B cell (primary cell): ENCODE measurements at regions of chr1 and their contacts with region 1.

Region 1: DNA sequence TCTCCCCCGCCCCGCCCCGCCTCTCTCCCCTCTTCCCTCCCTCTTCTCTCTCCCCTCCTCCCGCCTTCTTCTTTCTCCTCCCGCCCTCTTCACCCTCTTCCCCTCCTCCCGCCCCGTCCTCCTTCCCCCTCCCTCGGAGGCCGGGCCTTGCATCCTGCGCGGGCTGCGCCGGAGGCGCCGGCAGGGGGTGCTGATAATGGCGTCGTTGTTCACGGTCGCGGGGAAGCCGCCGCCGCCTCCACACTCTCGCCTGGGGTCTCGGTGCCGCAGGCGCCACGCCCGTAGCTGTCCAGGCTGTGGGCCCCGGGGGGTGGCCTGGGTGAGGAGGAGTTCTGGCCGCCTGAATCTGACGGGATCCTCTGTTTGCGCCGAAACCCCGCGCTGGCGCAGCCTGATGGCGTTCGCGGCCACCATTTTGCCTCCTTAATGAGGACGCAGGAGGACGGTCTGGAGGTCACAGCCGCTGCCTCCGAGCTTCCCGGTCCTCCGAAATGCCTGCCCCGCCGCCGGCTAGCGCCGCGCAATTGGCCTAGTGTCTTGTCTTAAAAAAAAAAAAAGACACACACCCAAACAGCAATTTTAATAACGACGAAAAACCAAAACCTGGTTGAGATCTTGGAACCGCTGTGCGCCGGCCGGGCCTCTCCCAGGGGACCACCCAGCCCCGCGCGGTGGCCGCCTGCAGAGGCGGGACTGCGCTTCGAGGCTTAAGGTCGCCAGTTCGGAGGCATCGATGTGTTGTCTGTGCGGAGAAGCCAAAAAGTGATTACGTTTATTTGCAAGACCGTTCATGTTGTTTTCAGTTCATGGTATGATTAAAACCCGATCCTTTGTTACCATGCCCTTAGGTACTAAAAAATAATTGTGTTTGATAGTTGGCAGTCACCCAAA is 106.6 kb upstream of the HNRNPU start:
- DNase-seq: peak; percentile 98
- ATAC-seq: peak; percentile 78
- H3K4me3 ChIP-seq: peak overlapping the region; percentile 79 to 98 (median 83)
- H3K4me3 Mint-ChIP-seq: peak overlapping the region; percentile 95
- H3K27ac ChIP-seq: peak overlapping the region; percentile 98 to 99
- H3K27ac Mint-ChIP-seq: peak overlapping the region; percentile 99
- H3K4me1 ChIP-seq: peaks cover 8 to 13% of the 10 kb centered on the region in 2 donors
- H3K4me1 Mint-ChIP-seq: peaks cover 17% of the 10 kb centered on the region
- H3K27me3 ChIP-seq: no peaks in the 10 kb centered on the region
- H3K27me3 Mint-ChIP-seq: no peaks in the 10 kb centered on the region
- CTCF ChIP-seq: peak; percentile 51

Region 2: GRCh38 chr1:244451951-244452795 is 518.7 kb before region 1 on chr1:
- CTCF ChIA-PET with region 1: no interaction called
- POLR2A ChIA-PET with region 1: interaction called, 7 read pairs
- intact Hi-C with region 1: loop called (anchors 2 kb)
- DNase-seq: peak; percentile 100
- ATAC-seq: peak; percentile 92
- H3K4me3 ChIP-seq: peak overlapping the region in 4 of 5 experiments; percentile 88 to 98 (median 93)
- H3K4me3 Mint-ChIP-seq: peak overlapping the region; percentile 95
- H3K27ac ChIP-seq: peak overlapping the region; percentile 92 to 94
- H3K27ac Mint-ChIP-seq: peak overlapping the region; percentile 94
- H3K4me1 ChIP-seq: peaks cover 17 to 18% of the 10 kb centered on the region in 2 donors
- H3K4me1 Mint-ChIP-seq: peaks cover 35% of the 10 kb centered on the region
- H3K27me3 ChIP-seq: no peaks in the 10 kb centered on the region
- H3K27me3 Mint-ChIP-seq: no peaks in the 10 kb centered on the region
- CTCF ChIP-seq: peak; percentile 47

Region 3: GRCh38 chr1:244652699-244653466 is 318.0 kb before region 1 on chr1 and contains the start of gene DESI2:
- CTCF ChIA-PET with region 1: no interaction called
- POLR2A ChIA-PET with region 1: interaction called, 3 read pairs
- intact Hi-C with region 1: loop called (anchors 1 kb)
- DNase-seq: peak; percentile 99
- ATAC-seq: peak; percentile 87
- H3K4me3 ChIP-seq: peak within 1 kb of the TSS; percentile 51 to 91 (median 81)
- H3K4me3 Mint-ChIP-seq: no peak within 1 kb of the TSS
- H3K27ac ChIP-seq: peak within 1 kb of the TSS; percentile 64 to 88
- H3K27ac Mint-ChIP-seq: peak within 1 kb of the TSS; percentile 93
- H3K4me1 ChIP-seq: peaks cover 23 to 24% of the 10 kb centered on the region in 2 donors
- H3K4me1 Mint-ChIP-seq: peaks cover 20% of the 10 kb centered on the region
- H3K27me3 ChIP-seq: no peaks in the 10 kb centered on the region
- H3K27me3 Mint-ChIP-seq: no peaks in the 10 kb centered on the region
- CTCF ChIP-seq: peak; percentile 65
- total RNA-seq, gene DESI2: 25.2 and 25.9 TPM in 2 replicates

Region 4: DNA sequence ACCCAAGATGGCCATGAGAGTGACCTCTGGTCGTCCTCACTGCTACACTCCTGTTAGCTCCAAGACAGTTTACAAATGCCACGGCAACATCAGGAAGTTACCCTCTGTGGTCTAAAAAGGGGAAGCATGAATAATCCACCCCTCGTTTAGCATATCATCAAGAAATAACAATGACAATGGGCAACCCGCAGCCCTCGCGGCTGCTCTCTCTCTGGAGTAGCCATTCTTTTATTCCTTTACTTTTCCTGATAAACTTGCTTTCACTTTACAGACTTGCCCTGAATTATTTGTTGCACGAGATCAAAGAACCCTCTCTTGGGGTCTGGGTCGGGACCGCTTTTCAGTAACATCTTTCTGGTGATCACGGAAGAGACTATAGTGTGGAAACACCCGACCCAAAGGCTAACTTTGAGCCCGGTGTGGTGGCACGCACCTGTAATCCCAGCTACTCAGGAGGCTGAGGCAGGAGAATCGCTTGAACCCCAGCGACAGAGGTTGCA is 155.3 kb before region 1 on chr1:
- CTCF ChIA-PET with region 1: interaction called, 3 read pairs
- POLR2A ChIA-PET with region 1: interaction called, 10 read pairs
- intact Hi-C with region 1: no loop called
- DNase-seq: peak; percentile 76
- ATAC-seq: peak; percentile 69
- H3K4me3 ChIP-seq: peak overlapping the region; percentile 47 to 68 (median 55)
- H3K4me3 Mint-ChIP-seq: peak overlapping the region; percentile 82
- H3K27ac ChIP-seq: peak overlapping the region; percentile 10 to 16
- H3K27ac Mint-ChIP-seq: peak overlapping the region; percentile 73
- H3K4me1 ChIP-seq: peaks cover 20 to 28% of the 10 kb centered on the region in 2 donors
- H3K4me1 Mint-ChIP-seq: peaks cover 27% of the 10 kb centered on the region
- H3K27me3 ChIP-seq: no peaks in the 10 kb centered on the region
- H3K27me3 Mint-ChIP-seq: no peaks in the 10 kb centered on the region
- CTCF ChIP-seq: no peak

Region 5: DNA sequence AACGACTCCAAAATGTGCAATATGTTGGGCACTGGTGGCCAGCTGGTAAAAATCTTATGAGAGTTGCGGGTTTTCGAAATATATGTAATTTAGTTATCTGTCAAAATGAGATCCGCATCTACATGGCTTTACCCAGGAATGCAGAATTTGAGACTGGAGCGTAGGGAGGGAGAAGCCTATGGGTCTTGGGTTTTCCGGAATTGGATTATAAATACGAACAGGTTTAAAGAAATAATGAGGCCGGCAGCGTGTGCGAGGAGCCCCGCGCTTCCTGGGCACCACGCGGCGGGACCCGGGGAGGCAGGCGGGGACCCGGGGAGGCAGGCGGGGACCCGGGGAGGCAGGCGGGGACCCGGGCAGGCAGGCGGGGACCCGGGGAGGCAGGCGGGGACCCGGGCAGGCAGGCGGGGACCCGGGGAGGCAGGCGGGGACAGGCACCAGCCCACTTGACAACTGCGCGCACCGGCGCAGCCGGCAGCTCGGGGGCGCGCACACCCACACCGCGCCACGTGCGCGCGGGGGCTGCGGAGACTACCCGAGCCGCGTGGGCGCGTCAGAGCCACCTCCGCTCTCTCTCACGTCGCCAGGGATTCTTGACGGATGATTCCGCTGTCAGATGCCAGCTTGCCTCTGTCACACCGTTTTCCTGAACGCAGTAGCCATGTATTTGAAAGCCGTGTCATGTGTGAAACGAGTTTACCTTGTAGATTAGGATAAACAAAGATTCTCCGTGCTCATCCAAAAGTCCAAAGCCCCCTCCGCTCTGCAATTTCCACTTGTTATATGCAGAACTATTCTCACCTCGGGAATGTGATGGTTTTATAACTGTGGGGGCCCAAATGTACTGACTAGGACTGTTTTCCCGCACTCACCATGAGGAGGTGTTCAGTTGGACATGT is 52.2 kb before region 1 on chr1:
- CTCF ChIA-PET with region 1: interaction called, 3 read pairs
- POLR2A ChIA-PET with region 1: interaction called, 5 read pairs
- intact Hi-C with region 1: loop called (anchors 1 kb)
- DNase-seq: peak; percentile 84
- ATAC-seq: peak; percentile 86
- H3K4me3 ChIP-seq: peak overlapping the region; percentile 51 to 66 (median 61)
- H3K4me3 Mint-ChIP-seq: peak overlapping the region; percentile 95
- H3K27ac ChIP-seq: peak overlapping the region; percentile 15 to 38
- H3K27ac Mint-ChIP-seq: no peak overlapping the region
- H3K4me1 ChIP-seq: peaks cover 27 to 30% of the 10 kb centered on the region in 2 donors
- H3K4me1 Mint-ChIP-seq: peaks cover 23% of the 10 kb centered on the region
- H3K27me3 ChIP-seq: no peaks in the 10 kb centered on the region
- H3K27me3 Mint-ChIP-seq: peaks cover 6% of the 10 kb centered on the region
- CTCF ChIP-seq: no peak

Region 6: DNA sequence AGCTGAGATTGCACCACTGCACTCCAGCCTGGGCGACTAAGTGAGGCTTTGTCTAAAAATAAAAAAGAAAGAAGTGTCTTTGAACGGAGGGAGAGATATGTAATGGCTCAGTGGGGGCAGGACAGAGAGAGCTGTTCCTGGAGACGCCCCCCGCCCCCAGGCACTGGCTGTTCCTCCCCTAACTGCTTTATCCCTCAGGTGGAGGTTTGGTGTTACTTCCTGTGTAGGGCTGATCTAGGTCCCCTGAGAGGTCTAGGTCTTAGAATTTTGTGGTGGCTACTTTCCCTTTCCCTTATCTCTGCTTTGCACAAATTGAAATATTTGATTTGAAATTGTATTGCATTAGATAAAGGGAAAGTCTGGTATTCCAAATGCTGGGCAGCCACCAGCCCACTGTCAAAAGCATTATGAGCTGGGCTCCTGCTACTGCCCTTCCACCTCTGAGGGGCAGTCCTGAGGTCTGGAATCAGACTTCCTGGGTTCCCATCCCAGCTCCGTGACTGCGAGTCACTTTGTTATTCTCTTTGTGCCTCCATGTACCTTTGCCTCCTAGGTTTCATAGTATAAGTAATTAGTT is 49.1 kb after region 1 on chr1:
- CTCF ChIA-PET with region 1: no interaction called
- POLR2A ChIA-PET with region 1: no interaction called
- intact Hi-C with region 1: loop called (anchors 5 kb)
- DNase-seq: no peak
- ATAC-seq: peak; percentile 53
- H3K4me3 ChIP-seq: no peak overlapping the region
- H3K4me3 Mint-ChIP-seq: no peak overlapping the region
- H3K27ac ChIP-seq: no peak overlapping the region
- H3K27ac Mint-ChIP-seq: no peak overlapping the region
- H3K4me1 ChIP-seq: peaks cover 6 to 10% of the 10 kb centered on the region in 2 donors
- H3K4me1 Mint-ChIP-seq: peaks cover 16% of the 10 kb centered on the region
- H3K27me3 ChIP-seq: no peaks in the 10 kb centered on the region
- H3K27me3 Mint-ChIP-seq: no peaks in the 10 kb centered on the region
- CTCF ChIP-seq: no peak

Region 7: GRCh38 chr1:245129319-245130240 is 158.7 kb after region 1 on chr1:
- CTCF ChIA-PET with region 1: no interaction called
- POLR2A ChIA-PET with region 1: no interaction called
- intact Hi-C with region 1: no loop called
- DNase-seq: no peak
- ATAC-seq: no peak
- H3K4me3 ChIP-seq: no peak overlapping the region
- H3K4me3 Mint-ChIP-seq: no peak overlapping the region
- H3K27ac ChIP-seq: no peak overlapping the region
- H3K27ac Mint-ChIP-seq: no peak overlapping the region
- H3K4me1 ChIP-seq: no peaks in the 10 kb centered on the region
- H3K4me1 Mint-ChIP-seq: no peaks in the 10 kb centered on the region
- H3K27me3 ChIP-seq: peaks cover 0 to 3% (median 0%) of the 10 kb centered on the region in 4 experiments
- H3K27me3 Mint-ChIP-seq: peaks cover 45% of the 10 kb centered on the region
- CTCF ChIP-seq: no peak

Region 8: DNA sequence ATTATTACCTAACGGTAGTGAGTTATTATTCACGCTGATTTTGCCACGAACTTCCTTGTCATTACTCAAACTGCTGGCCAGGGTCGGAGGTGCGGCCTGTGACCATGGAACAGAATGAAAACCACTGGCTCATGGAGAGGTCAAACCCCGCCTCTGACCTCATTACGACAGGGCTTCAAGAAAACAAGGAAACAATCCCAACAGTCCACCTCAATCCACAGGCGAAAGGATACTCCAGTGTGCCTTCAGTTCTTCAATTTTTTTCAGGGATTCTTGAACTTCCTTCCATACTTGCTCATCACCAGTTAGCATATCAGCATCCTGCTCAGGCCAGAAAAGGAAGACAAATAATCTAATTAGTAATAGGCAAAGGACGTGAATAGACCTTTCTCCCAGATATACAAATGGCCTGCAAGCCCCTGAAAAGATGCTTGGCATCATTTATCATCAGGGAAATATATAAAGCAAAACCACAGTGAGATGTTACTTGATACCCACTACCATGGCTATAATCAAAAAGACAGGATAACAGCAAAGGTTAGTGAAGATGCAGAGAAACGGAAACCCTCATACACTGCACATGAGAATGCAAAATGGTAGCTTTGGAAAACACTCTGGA is 892.8 kb after region 1 on chr1:
- CTCF ChIA-PET with region 1: no interaction called
- POLR2A ChIA-PET with region 1: no interaction called
- intact Hi-C with region 1: no loop called
- DNase-seq: no peak
- ATAC-seq: no peak
- H3K4me3 ChIP-seq: no peak overlapping the region
- H3K4me3 Mint-ChIP-seq: no peak overlapping the region
- H3K27ac ChIP-seq: no peak overlapping the region
- H3K27ac Mint-ChIP-seq: no peak overlapping the region
- H3K4me1 ChIP-seq: no peaks in the 10 kb centered on the region
- H3K4me1 Mint-ChIP-seq: no peaks in the 10 kb centered on the region
- H3K27me3 ChIP-seq: no peaks in the 10 kb centered on the region
- H3K27me3 Mint-ChIP-seq: no peaks in the 10 kb centered on the region
- CTCF ChIP-seq: no peak